ENCODE measurements at regions of chr6 and their contacts with region 1.

Region 1: GRCh38 chr6:45163952-45164766 is 164.0 kb upstream of the RUNX2 start:
- DNase-seq: peak; percentile 60
- H3K4me3 Mint-ChIP-seq: peak overlapping the region; percentile 46
- H3K27ac Mint-ChIP-seq: peak overlapping the region; percentile 74
- H3K4me1 Mint-ChIP-seq: peaks cover 42% of the 10 kb centered on the region
- H3K27me3 Mint-ChIP-seq: no peaks in the 10 kb centered on the region

Region 2: GRCh38 chr6:44932651-44933091 is 231.5 kb before region 1 on chr6:
- CTCF ChIA-PET with region 1: no interaction called
- POLR2A ChIA-PET with region 1: no interaction called
- intact Hi-C with region 1: loop called (anchors 5 kb)
- DNase-seq: peak; percentile 43
- H3K4me3 Mint-ChIP-seq: peak overlapping the region; percentile 80
- H3K27ac Mint-ChIP-seq: peak overlapping the region; percentile 88
- H3K4me1 Mint-ChIP-seq: peaks cover 41% of the 10 kb centered on the region
- H3K27me3 Mint-ChIP-seq: no peaks in the 10 kb centered on the region

Region 3: DNA sequence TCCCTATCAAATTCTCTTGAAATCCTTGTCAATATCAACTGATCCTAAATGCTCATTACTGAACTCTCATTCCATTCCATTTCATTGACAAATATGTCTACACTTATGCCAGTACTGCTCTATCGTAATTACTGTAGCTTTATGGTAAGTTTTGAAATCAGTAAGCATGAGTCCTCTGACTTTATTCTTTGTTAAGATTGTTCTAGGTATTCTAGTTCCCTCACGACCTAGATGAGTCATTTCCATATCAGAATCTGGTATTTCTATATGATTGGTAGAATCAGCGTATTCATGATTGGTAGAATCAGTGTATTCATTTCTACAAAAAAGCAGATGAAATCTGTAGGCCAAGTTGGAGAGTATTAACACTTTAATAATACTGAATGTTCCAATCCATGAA is 154.6 kb before region 1 on chr6:
- CTCF ChIA-PET with region 1: no interaction called
- POLR2A ChIA-PET with region 1: no interaction called
- intact Hi-C with region 1: loop called (anchors 1 kb)
- DNase-seq: no peak
- H3K4me3 Mint-ChIP-seq: no peak overlapping the region
- H3K27ac Mint-ChIP-seq: peak overlapping the region; percentile 66
- H3K4me1 Mint-ChIP-seq: peaks cover 25% of the 10 kb centered on the region
- H3K27me3 Mint-ChIP-seq: no peaks in the 10 kb centered on the region

Region 4: DNA sequence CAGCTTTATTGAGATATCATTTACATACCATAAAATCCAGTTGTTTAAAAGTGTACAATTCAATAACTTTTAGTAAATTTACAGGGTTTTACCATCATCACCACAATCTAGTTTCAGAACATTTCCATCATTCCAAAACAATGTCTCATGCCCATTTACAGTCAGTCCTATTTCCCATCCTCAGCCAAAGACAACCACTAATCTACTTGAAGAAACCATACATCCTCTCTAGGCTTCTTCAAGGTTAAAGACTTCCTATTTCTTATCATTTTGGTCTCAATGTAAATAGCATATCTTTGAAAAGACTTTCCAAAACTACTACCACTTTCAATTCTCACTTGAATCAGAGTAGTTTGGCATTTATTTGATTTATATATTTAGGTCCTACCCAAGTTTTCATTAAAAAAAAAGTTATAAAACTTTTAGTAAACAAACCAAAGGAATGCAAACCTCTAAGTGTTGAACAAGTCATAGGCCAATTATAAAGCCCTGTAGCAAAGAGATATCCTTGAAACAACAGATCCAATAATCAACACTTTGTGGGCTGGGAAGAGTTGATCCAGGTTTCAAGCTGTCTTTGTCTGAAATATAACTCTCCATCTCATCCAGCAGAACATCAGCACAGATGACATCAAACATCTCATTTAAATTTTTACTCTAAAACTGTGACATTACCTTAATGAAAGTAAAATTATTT is 47.3 kb before region 1 on chr6:
- CTCF ChIA-PET with region 1: no interaction called
- POLR2A ChIA-PET with region 1: no interaction called
- intact Hi-C with region 1: loop called (anchors 1 kb)
- DNase-seq: no peak
- H3K4me3 Mint-ChIP-seq: no peak overlapping the region
- H3K27ac Mint-ChIP-seq: no peak overlapping the region
- H3K4me1 Mint-ChIP-seq: peaks cover 17% of the 10 kb centered on the region
- H3K27me3 Mint-ChIP-seq: no peaks in the 10 kb centered on the region

Region 5: DNA sequence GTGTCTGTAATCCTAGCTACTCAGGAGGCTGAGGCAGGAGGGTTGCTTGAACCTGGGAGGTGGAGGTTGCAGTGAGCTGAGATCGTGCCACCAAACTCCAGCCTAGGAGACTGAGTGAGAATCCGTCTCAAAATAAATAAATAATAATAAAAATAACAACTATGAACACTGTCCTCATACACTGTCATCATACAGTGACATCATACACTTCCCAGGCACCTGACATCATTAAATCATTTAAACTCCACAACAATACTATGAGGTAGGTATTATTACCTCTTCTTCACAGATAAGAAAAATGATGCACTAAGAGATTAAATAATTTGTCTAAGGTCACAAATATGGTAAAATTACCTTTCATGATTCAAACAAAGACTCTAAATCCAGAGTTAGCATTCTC is 37.0 kb before region 1 on chr6:
- CTCF ChIA-PET with region 1: no interaction called
- POLR2A ChIA-PET with region 1: no interaction called
- intact Hi-C with region 1: no loop called
- DNase-seq: no peak
- H3K4me3 Mint-ChIP-seq: no peak overlapping the region
- H3K27ac Mint-ChIP-seq: no peak overlapping the region
- H3K4me1 Mint-ChIP-seq: no peaks in the 10 kb centered on the region
- H3K27me3 Mint-ChIP-seq: no peaks in the 10 kb centered on the region

Region 6: GRCh38 chr6:45590225-45590624 is 426.1 kb after region 1 on chr6:
- CTCF ChIA-PET with region 1: no interaction called
- POLR2A ChIA-PET with region 1: no interaction called
- intact Hi-C with region 1: loop called (anchors 10 kb)
- DNase-seq: no peak
- H3K4me3 Mint-ChIP-seq: no peak overlapping the region
- H3K27ac Mint-ChIP-seq: peak overlapping the region; percentile 53
- H3K4me1 Mint-ChIP-seq: peaks cover 94% of the 10 kb centered on the region
- H3K27me3 Mint-ChIP-seq: no peaks in the 10 kb centered on the region